ENCODE measurements at regions of chr19 and their contacts with region 1.

Region 1: DNA sequence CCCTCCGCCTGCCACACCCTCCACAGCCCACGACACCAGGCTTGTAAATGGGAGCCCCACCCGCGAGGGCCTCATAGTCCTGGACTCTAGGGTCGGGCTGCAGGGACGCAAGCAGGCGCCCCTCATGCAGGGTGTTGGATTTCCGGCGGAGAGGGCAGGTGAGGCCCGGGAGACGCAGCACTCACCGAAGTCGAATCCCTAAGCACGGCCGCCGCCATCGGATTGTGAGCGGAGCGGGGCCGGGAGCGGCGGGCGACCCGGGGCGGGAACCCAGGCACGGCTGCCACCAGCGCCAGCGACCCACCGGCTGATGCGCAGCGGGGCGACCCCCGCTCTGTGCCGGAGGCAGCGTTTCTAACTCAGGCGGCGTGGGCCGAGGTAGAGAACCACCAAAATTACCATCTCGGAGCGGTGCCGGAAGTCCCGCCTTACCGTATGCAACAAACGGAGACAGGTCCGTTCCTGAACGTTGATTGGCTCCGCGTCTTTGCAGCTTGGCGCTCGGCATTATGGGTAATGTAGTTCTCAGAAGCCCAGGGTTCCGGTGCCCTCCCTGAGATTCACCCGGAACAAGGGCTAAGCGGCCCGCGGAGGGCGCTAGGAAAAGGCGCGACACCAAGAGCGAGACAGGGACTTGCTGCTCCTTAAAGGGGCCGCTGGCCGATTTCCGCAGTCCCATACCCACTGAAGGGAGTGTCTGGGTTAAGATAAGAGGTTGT is at the start of gene ZNF416:
- DNase-seq: peak; percentile 99
- ATAC-seq: peak; percentile 89
- H3K4me3 ChIP-seq: peak within 1 kb of the TSS; percentile 28 to 90 (median 72)
- H3K4me3 Mint-ChIP-seq: peak within 1 kb of the TSS; percentile 86
- H3K27ac ChIP-seq: peak within 1 kb of the TSS; percentile 46 to 79
- H3K27ac Mint-ChIP-seq: peak within 1 kb of the TSS; percentile 94
- H3K4me1 ChIP-seq: peaks cover 19 to 27% of the 10 kb centered on the region in 2 donors
- H3K4me1 Mint-ChIP-seq: peaks cover 25% of the 10 kb centered on the region
- H3K27me3 ChIP-seq: no peaks in the 10 kb centered on the region
- H3K27me3 Mint-ChIP-seq: no peaks in the 10 kb centered on the region
- CTCF ChIP-seq: no peak
- total RNA-seq, gene ZNF416: 13.0 and 13.9 TPM in 2 replicates

Region 2: GRCh38 chr19:57410877-57411671 is 167.6 kb before region 1 on chr19 and contains the start of gene ZNF17:
- CTCF ChIA-PET with region 1: no interaction called
- POLR2A ChIA-PET with region 1: no interaction called
- intact Hi-C with region 1: loop called (anchors 1 kb)
- DNase-seq: peak; percentile 93
- ATAC-seq: peak; percentile 100
- H3K4me3 ChIP-seq: peak within 1 kb of the TSS; percentile 66 to 98 (median 89)
- H3K4me3 Mint-ChIP-seq: peak within 1 kb of the TSS; percentile 97
- H3K27ac ChIP-seq: peak within 1 kb of the TSS; percentile 22 to 77
- H3K27ac Mint-ChIP-seq: peak within 1 kb of the TSS; percentile 89
- H3K4me1 ChIP-seq: peaks cover 12 to 17% of the 10 kb centered on the region in 2 donors
- H3K4me1 Mint-ChIP-seq: peaks cover 26% of the 10 kb centered on the region
- H3K27me3 ChIP-seq: no peaks in the 10 kb centered on the region
- H3K27me3 Mint-ChIP-seq: no peaks in the 10 kb centered on the region
- CTCF ChIP-seq: no peak
- total RNA-seq, gene ZNF17: 25.8 and 30.7 TPM in 2 replicates

Region 3: DNA sequence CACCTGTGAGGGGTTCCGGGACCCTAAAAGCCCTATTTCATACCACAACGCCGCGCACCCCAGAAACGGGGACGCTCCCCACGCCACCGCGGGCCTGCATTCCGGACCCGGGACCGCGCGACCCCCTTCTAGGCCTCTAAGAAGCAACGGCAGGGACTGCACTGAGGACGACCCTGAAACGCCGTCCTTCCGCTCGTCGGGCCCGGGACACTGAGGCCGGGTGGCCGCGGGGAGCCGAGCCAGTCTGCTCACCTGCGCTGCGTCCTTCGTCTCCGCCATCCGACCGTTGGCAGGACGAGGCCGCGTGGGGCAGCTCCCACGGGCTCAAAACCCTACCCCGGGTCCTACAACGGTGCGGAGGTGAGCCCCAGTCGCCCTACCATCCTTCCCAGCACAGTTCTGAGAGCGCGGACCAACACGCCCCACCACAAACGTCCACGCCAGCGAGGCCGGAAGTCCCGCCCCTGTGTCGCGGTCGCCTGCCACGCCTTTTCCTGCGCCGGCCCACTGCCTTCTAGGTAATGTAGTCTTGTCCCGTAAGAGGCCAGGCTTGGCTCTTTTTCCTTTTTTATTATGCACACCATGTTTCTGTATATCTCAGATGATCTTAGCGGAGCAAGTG is 19.1 kb before region 1 on chr19 and contains the start of gene ZNF550:
- CTCF ChIA-PET with region 1: interaction called, 4 read pairs
- POLR2A ChIA-PET with region 1: no interaction called
- intact Hi-C with region 1: loop called (anchors 1 kb)
- DNase-seq: peak; percentile 87
- ATAC-seq: peak; percentile 99
- H3K4me3 ChIP-seq: peak within 1 kb of the TSS; percentile 64 to 98 (median 92)
- H3K4me3 Mint-ChIP-seq: peak within 1 kb of the TSS; percentile 94
- H3K27ac ChIP-seq: peak within 1 kb of the TSS; percentile 28 to 69
- H3K27ac Mint-ChIP-seq: peak within 1 kb of the TSS; percentile 86
- H3K4me1 ChIP-seq: peaks cover 19 to 21% of the 10 kb centered on the region in 2 donors
- H3K4me1 Mint-ChIP-seq: peaks cover 30% of the 10 kb centered on the region
- H3K27me3 ChIP-seq: peaks cover 0 to 4% (median 2%) of the 10 kb centered on the region in 4 experiments
- H3K27me3 Mint-ChIP-seq: peaks cover 13% of the 10 kb centered on the region
- CTCF ChIP-seq: no peak
- total RNA-seq, gene ZNF550: 31.1 and 38.1 TPM in 2 replicates

Region 4: DNA sequence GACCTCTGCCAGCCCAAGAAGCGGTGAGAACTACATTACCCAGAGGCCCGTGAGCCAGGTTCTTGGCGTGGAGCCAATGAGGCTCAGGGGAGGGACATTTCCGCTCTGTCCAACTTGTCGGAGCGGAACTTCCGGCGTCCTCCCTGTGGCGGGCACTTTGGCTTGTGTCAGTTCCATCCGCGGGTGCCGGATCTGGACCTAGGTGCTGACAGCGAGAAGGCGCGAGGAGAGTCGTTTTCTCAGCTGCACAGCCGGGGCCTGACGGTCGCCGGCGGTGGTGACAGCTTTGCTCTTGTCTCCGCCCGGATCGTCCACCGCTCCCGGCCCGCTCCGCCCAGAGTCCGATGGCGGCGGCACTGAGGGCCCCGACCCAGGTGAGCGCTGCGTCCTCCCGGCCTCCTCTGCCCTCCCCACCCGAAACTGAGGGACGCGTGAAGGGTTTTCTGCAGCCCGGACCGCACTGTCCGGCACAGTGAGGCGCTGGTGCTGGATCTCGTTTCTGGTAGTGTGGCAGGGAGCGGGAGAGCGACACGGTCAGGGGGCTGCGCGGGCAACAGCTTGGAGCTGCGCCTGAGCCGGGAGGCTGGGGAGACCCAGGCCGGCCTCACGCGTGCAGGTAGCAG is 21.2 kb after region 1 on chr19 and contains the start of gene ZNF530:
- CTCF ChIA-PET with region 1: no interaction called
- POLR2A ChIA-PET with region 1: no interaction called
- intact Hi-C with region 1: loop called (anchors 1 kb)
- DNase-seq: peak; percentile 88
- ATAC-seq: peak; percentile 99
- H3K4me3 ChIP-seq: peak within 1 kb of the TSS; percentile 44 to 81 (median 77)
- H3K4me3 Mint-ChIP-seq: peak within 1 kb of the TSS; percentile 90
- H3K27ac ChIP-seq: peak within 1 kb of the TSS in 1 of 2 donors; percentile 52
- H3K27ac Mint-ChIP-seq: peak within 1 kb of the TSS; percentile 79
- H3K4me1 ChIP-seq: peaks cover 11 to 14% of the 10 kb centered on the region in 2 donors
- H3K4me1 Mint-ChIP-seq: peaks cover 20% of the 10 kb centered on the region
- H3K27me3 ChIP-seq: no peaks in the 10 kb centered on the region
- H3K27me3 Mint-ChIP-seq: peaks cover 3% of the 10 kb centered on the region
- CTCF ChIP-seq: no peak
- total RNA-seq, gene ZNF530: 11.2 and 11.6 TPM in 2 replicates

Region 5: GRCh38 chr19:57613941-57614743 is 35.5 kb after region 1 on chr19 and contains the start of gene ZNF134:
- CTCF ChIA-PET with region 1: no interaction called
- POLR2A ChIA-PET with region 1: interaction called, 8 read pairs
- intact Hi-C with region 1: loop called (anchors 1 kb)
- DNase-seq: peak; percentile 94
- ATAC-seq: peak; percentile 99
- H3K4me3 ChIP-seq: peak within 1 kb of the TSS; percentile 45 to 97 (median 92)
- H3K4me3 Mint-ChIP-seq: peak within 1 kb of the TSS; percentile 93
- H3K27ac ChIP-seq: peak within 1 kb of the TSS; percentile 42 to 81
- H3K27ac Mint-ChIP-seq: peak within 1 kb of the TSS; percentile 90
- H3K4me1 ChIP-seq: peaks cover 14 to 21% of the 10 kb centered on the region in 2 donors
- H3K4me1 Mint-ChIP-seq: peaks cover 40% of the 10 kb centered on the region
- H3K27me3 ChIP-seq: no peaks in the 10 kb centered on the region
- H3K27me3 Mint-ChIP-seq: no peaks in the 10 kb centered on the region
- CTCF ChIP-seq: peak; percentile 34
- total RNA-seq, gene ZNF134: 38.1 and 38.9 TPM in 2 replicates

Region 6: DNA sequence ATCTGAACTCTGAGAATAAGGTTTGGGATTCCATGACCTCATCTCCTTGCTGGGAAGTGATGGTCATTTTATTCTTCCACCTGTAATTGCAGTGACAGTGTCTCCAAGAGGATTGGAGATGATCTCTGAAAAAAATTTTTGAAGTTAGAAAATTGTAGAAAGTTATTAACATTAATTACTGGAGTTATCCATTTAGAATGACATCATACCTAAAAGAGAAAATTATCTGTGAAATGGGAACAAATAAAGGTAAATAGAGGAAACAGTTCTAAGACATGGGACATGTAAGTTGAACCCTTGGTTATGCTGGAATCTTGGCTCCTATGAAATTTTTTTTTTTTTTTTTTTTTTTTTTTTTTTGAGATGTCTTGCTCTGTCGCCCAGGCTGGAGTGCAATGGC is 48.8 kb after region 1 on chr19:
- CTCF ChIA-PET with region 1: no interaction called
- POLR2A ChIA-PET with region 1: no interaction called
- intact Hi-C with region 1: no loop called
- DNase-seq: no peak
- ATAC-seq: no peak
- H3K4me3 ChIP-seq: no peak overlapping the region
- H3K4me3 Mint-ChIP-seq: no peak overlapping the region
- H3K27ac ChIP-seq: no peak overlapping the region
- H3K27ac Mint-ChIP-seq: no peak overlapping the region
- H3K4me1 ChIP-seq: peaks cover 0 to under 1% of the 10 kb centered on the region in 2 donors
- H3K4me1 Mint-ChIP-seq: no peaks in the 10 kb centered on the region
- H3K27me3 ChIP-seq: no peaks in the 10 kb centered on the region
- H3K27me3 Mint-ChIP-seq: no peaks in the 10 kb centered on the region
- CTCF ChIP-seq: no peak

Measured in B cell (primary cell).